GM18951 (cell line): ENCODE measurements at regions of chr9 and their contacts with region 1.

Region 1: DNA sequence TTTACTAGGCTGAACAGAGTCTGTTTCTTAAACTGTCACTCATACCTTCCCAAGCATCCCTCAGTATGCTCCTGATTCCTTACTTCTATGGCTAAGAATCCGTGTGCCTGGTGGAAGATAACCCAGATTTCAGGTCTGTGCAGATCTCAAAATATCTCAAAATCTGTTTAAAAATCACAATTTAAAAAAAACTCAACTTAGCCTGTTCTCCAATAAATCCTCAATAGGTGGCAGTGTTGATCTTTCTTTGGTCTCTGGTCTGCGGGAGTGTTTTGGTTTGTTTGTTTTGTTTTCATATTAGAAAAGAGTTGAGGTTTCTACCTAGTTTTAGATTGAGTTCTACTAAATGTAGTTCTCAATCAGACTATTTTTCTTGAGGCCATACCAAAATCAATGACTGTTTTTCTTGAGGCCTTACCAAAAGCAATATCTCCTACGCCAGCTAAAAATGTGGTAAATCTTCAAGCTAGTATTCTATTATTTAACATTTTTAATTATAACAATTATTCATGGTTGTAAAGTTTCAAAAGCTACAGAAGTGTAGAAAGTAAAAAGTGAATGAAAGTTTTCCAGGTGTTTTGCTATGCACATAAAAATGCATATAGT is 57.9 kb downstream of the TGFBR1 start:
- POLR2A ChIP-seq: no peak

Region 2: GRCh38 chr9:100598641-100599145 is 1435.8 kb after region 1 on chr9:
- in situ Hi-C with region 1: loop called (anchors 25 kb)
- POLR2A ChIP-seq: peak; percentile 66